ENCODE measurements at regions of chr17 and their contacts with region 1.

Region 1: GRCh38 chr17:42517516-42517915 is 18.5 kb upstream of the NAGLU start:
- DNase-seq: peak; percentile 78 to 96 (median 88)
- H3K4me3 ChIP-seq: no peak overlapping the region
- H3K27ac ChIP-seq: peak overlapping the region; percentile 94 to 99 (median 95)
- H3K4me1 ChIP-seq: peaks cover 52 to 66% of the 10 kb centered on the region in 2 donors
- H3K27me3 ChIP-seq: no peaks in the 10 kb centered on the region
- CTCF ChIP-seq: peak; percentile 84 to 93 (median 86)
- POLR2A ChIP-seq: no peak

Region 2: GRCh38 chr17:42322382-42323267 is 194.9 kb before region 1 on chr17:
- intact Hi-C with region 1: loop called (anchors 10 kb)
- DNase-seq: peak; percentile 91 to 99 (median 97)
- H3K4me3 ChIP-seq: no peak overlapping the region
- H3K27ac ChIP-seq: peak overlapping the region in 2 of 5 donors; percentile 28 to 37
- H3K4me1 ChIP-seq: peaks cover 0 to 6% of the 10 kb centered on the region in 2 donors
- H3K27me3 ChIP-seq: no peaks in the 10 kb centered on the region
- CTCF ChIP-seq: peak; percentile 95 to 100 (median 100)
- POLR2A ChIP-seq: no peak

Region 3: GRCh38 chr17:42387565-42388380 is 129.7 kb before region 1 on chr17:
- intact Hi-C with region 1: no loop called
- DNase-seq: peak in 6 of 7 donors; percentile 49 to 61 (median 57)
- H3K4me3 ChIP-seq: peak overlapping the region; percentile 20 to 75 (median 48)
- H3K27ac ChIP-seq: peak overlapping the region; percentile 96 to 100 (median 98)
- H3K4me1 ChIP-seq: peaks cover 11 to 48% of the 10 kb centered on the region in 2 donors
- H3K27me3 ChIP-seq: no peaks in the 10 kb centered on the region
- CTCF ChIP-seq: no peak
- POLR2A ChIP-seq: peak in 1 of 2 donors; percentile 18

Region 4: DNA sequence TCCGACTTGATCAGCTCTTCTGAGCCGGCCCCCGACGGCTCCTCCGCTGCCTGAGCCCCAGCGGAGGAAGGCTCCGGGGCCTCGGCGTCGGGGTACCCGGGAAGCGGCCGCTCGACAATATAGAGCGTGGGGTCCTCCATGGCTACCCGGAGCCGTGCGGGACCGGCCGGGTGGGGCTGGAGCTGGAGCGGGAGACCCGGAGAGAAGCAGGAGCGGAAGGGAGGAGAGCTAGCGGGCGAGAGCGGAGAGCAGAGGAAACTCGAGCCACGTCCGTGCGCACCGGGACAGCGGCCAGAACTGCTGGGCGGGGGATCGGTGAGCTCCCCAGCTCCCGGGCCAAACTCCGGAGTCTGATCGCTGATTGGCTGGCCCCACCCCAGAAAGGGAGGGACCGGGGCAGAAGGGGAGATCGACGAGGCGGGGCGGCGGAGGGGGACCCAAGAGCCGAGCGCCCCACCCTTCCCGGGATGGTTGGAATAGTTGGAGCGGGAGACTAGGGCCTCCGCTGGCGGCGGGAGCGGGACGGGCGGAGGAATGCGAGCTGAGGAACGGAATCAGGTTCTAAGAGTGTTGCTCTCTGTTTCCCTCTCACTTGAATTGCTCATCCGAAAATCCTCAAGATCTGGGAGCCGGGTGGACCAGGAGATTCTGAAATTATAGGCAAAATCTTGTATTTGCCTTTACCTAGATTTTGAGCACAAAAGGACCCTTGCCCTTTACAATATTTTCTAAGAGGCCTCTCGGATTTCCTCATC is 94.4 kb before region 1 on chr17 and contains the start of gene CAVIN1:
- intact Hi-C with region 1: loop called (anchors 5 kb)
- DNase-seq: peak; percentile 97 to 98 (median 97)
- H3K4me3 ChIP-seq: peak within 1 kb of the TSS; percentile 57 to 88 (median 72)
- H3K27ac ChIP-seq: peak within 1 kb of the TSS; percentile 71 to 96 (median 89)
- H3K4me1 ChIP-seq: peaks cover 6 to 7% of the 10 kb centered on the region in 2 donors
- H3K27me3 ChIP-seq: no peaks in the 10 kb centered on the region
- CTCF ChIP-seq: no peak
- POLR2A ChIP-seq: peak; percentile 86 to 96
- total RNA-seq, gene CAVIN1: 13.1 to 206 (median 161) TPM

Region 5: DNA sequence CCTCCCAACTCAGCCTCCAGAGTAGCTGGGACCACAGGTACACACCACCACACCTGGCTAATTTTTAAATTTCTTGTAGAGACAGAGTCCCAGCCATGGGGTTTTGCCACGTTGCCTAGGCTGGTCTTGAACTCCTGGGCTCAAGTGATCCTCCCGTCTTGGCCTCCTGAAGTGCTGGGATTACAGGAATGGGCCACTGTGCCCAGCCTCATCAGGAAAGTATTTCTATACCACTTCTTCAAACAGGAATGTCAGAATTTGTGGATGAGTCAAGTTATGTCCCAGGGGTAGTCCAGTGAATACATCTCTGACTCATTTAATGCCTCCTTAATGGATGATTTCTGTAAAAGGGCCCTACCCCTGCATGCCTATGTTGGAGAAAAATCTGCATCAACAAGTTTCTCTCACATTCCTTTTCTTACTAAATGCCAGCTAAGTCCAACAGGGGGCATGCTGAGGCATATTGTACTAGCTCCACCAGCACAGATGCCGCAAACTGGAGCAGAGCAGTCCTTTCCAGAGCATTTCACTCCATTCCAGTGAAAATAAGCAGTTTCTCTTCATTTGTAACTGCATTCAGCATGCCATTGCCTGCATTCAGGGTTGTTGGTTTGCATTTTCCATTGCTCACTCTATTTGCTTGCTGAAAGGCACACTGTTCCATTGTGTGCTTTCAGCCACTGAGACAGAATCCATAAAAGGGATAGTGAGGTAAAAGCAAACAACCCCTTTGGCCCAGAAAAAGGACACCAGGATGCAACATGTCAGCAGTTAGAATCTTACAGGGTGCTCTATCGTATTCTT is 89.2 kb before region 1 on chr17:
- intact Hi-C with region 1: loop called (anchors 5 kb)
- DNase-seq: peak; percentile 57 to 83 (median 72)
- H3K4me3 ChIP-seq: no peak overlapping the region
- H3K27ac ChIP-seq: peak overlapping the region in 2 of 5 donors; percentile 24 to 33
- H3K4me1 ChIP-seq: peaks cover 0 to 13% of the 10 kb centered on the region in 2 donors
- H3K27me3 ChIP-seq: no peaks in the 10 kb centered on the region
- CTCF ChIP-seq: peak; percentile 63 to 76 (median 74)
- POLR2A ChIP-seq: no peak

Measured in adrenal gland (tissue), 19 donors.